ENCODE measurements at regions of chr6 and their contacts with region 1.

Region 1: DNA sequence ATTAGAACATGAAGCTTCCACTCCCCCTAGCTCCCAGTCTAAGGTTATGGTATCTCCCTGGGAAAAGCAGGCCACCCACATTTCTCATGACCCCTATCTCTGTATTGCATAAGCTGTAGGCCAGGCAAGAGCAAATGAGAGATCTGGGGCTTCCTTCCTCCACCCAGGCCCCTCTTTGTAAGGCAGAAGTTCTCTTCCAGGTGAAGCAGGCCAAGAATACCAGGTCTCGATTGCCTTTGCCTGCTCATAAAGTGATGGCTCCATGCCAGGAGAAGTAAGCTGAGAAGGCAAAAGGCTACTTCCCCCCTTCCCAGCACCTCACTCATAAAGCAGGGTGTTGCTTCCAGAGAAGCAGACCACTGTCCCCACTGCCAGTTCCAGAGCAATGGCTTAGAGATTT is 144.1 kb upstream of the KCNK16 start:
- DNase-seq: no peak
- H3K4me3 ChIP-seq: no peak overlapping the region
- H3K27ac ChIP-seq: no peak overlapping the region
- H3K4me1 ChIP-seq: peaks cover 7% of the 10 kb centered on the region
- H3K27me3 ChIP-seq: no peaks in the 10 kb centered on the region
- CTCF ChIP-seq: no peak

Region 2: GRCh38 chr6:39243809-39244208 is 222.8 kb before region 1 on chr6:
- CTCF ChIA-PET with region 1: no interaction called
- dilution Hi-C with region 1: no loop called
- in situ Hi-C with region 1: no loop called
- intact Hi-C with region 1: no loop called
- DNase-seq: peak; percentile 33
- H3K4me3 ChIP-seq: no peak overlapping the region
- H3K27ac ChIP-seq: no peak overlapping the region
- H3K4me1 ChIP-seq: peaks cover 5% of the 10 kb centered on the region
- H3K27me3 ChIP-seq: no peaks in the 10 kb centered on the region
- CTCF ChIP-seq: no peak

Region 3: DNA sequence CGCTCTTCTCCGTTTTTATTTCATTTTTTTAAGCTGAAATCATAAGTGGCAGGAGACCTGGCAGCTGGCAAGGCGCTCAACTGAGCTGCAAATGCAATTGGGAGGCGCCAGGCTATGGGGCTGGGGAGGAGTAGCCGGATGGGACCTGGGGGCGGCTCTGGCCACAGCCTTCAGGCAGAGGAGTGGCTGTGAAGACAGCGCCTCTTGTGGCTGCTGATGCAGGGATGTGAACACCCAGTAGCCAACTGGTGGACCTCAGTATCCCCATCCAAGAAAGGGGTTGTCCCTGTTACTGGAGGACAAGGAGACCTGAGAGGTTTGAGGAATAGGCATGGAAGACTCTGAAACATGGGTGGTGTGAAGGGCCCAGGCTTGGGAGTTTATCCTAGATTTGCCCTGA is 165.0 kb before region 1 on chr6:
- CTCF ChIA-PET with region 1: no interaction called
- dilution Hi-C with region 1: no loop called
- in situ Hi-C with region 1: no loop called
- intact Hi-C with region 1: no loop called
- DNase-seq: no peak
- H3K4me3 ChIP-seq: no peak overlapping the region
- H3K27ac ChIP-seq: no peak overlapping the region
- H3K4me1 ChIP-seq: no peaks in the 10 kb centered on the region
- H3K27me3 ChIP-seq: peaks cover 3% of the 10 kb centered on the region
- CTCF ChIP-seq: peak; percentile 3 to 10

Region 4: GRCh38 chr6:39389484-39389767 is 77.2 kb before region 1 on chr6:
- CTCF ChIA-PET with region 1: no interaction called
- dilution Hi-C with region 1: loop called (anchors 5 kb)
- in situ Hi-C with region 1: no loop called
- intact Hi-C with region 1: no loop called
- DNase-seq: no peak
- H3K4me3 ChIP-seq: no peak overlapping the region
- H3K27ac ChIP-seq: no peak overlapping the region
- H3K4me1 ChIP-seq: no peaks in the 10 kb centered on the region
- H3K27me3 ChIP-seq: no peaks in the 10 kb centered on the region
- CTCF ChIP-seq: peak; percentile 29 to 30

Region 5: DNA sequence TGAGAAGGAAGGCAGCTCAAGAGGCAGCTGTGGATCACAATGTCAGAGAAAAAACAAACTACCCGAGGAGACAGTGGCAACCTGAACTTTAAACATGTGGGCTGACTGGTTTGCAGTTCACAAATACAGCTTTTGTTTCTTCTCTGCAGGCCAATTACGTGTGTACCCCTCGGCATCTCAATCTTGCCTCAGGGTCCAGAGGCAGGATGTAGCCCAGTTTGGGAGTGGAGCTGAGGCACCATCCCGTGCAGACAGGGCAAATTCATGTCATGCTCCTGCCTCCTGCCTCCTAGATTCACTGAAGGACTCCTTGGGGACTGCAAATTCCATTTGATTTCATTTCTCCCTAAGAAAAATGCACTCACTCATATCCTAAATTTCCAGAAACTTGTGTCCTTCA is 49.9 kb before region 1 on chr6:
- CTCF ChIA-PET with region 1: no interaction called
- dilution Hi-C with region 1: loop called (anchors 5 kb)
- in situ Hi-C with region 1: no loop called
- intact Hi-C with region 1: no loop called
- DNase-seq: peak; percentile 32
- H3K4me3 ChIP-seq: no peak overlapping the region
- H3K27ac ChIP-seq: peak overlapping the region; percentile 91
- H3K4me1 ChIP-seq: peaks cover 28% of the 10 kb centered on the region
- H3K27me3 ChIP-seq: no peaks in the 10 kb centered on the region
- CTCF ChIP-seq: no peak

Region 6: GRCh38 chr6:39430871-39431523 is 35.6 kb before region 1 on chr6:
- CTCF ChIA-PET with region 1: interaction called, 12 read pairs
- dilution Hi-C with region 1: no loop called
- in situ Hi-C with region 1: no loop called
- intact Hi-C with region 1: no loop called
- DNase-seq: no peak
- H3K4me3 ChIP-seq: no peak overlapping the region
- H3K27ac ChIP-seq: no peak overlapping the region
- H3K4me1 ChIP-seq: peaks cover 42% of the 10 kb centered on the region
- H3K27me3 ChIP-seq: no peaks in the 10 kb centered on the region
- CTCF ChIP-seq: no peak

Measured in mammary epithelial cell (primary cell).